Activated CD4-positive, alpha-beta memory T cell treated with anti-CD3 and anti-CD28 coated beads for 36 hours (primary cell): ENCODE measurements at regions of chr9 and their contacts with region 1.

Region 1: GRCh38 chr9:97728256-97728655 is 31.1 kb upstream of the XPA start:
- DNase-seq: no peak
- H3K4me3 Mint-ChIP-seq: no peak overlapping the region
- H3K27ac Mint-ChIP-seq: no peak overlapping the region
- H3K4me1 Mint-ChIP-seq: no peaks in the 10 kb centered on the region
- H3K27me3 Mint-ChIP-seq: peaks cover 4% of the 10 kb centered on the region

Region 2: GRCh38 chr9:97781902-97782301 is 53.6 kb after region 1 on chr9:
- CTCF ChIA-PET with region 1: interaction called, 3 read pairs
- POLR2A ChIA-PET with region 1: no interaction called
- intact Hi-C with region 1: loop called (anchors 5 kb)
- DNase-seq: no peak
- H3K4me3 Mint-ChIP-seq: no peak overlapping the region
- H3K27ac Mint-ChIP-seq: no peak overlapping the region
- H3K4me1 Mint-ChIP-seq: no peaks in the 10 kb centered on the region
- H3K27me3 Mint-ChIP-seq: peaks cover 8% of the 10 kb centered on the region